Esophagus squamous epithelium (tissue), 5 donors: ENCODE measurements at regions of chr14 and their contacts with region 1.

Region 1: GRCh38 chr14:63624203-63624602 is 17.5 kb downstream of the WDR89 start:
- DNase-seq: no peak
- H3K4me3 ChIP-seq: no peak overlapping the region
- H3K27ac ChIP-seq: no peak overlapping the region
- H3K4me1 ChIP-seq: no peaks in the 10 kb centered on the region
- H3K27me3 ChIP-seq: no peaks in the 10 kb centered on the region
- CTCF ChIP-seq: no peak
- POLR2A ChIP-seq: no peak

Region 2: GRCh38 chr14:63493246-63493645 is 131.0 kb before region 1 on chr14:
- intact Hi-C with region 1: no loop called
- DNase-seq: no peak
- H3K4me3 ChIP-seq: no peak overlapping the region
- H3K27ac ChIP-seq: peak overlapping the region in 3 of 4 donors; percentile 64 to 82 (median 71)
- H3K4me1 ChIP-seq: peaks cover 0 to 77% (median 31%) of the 10 kb centered on the region in 3 donors
- H3K27me3 ChIP-seq: no peaks in the 10 kb centered on the region
- CTCF ChIP-seq: peak in 1 of 6 experiments; percentile 24
- POLR2A ChIP-seq: no peak

Region 3: DNA sequence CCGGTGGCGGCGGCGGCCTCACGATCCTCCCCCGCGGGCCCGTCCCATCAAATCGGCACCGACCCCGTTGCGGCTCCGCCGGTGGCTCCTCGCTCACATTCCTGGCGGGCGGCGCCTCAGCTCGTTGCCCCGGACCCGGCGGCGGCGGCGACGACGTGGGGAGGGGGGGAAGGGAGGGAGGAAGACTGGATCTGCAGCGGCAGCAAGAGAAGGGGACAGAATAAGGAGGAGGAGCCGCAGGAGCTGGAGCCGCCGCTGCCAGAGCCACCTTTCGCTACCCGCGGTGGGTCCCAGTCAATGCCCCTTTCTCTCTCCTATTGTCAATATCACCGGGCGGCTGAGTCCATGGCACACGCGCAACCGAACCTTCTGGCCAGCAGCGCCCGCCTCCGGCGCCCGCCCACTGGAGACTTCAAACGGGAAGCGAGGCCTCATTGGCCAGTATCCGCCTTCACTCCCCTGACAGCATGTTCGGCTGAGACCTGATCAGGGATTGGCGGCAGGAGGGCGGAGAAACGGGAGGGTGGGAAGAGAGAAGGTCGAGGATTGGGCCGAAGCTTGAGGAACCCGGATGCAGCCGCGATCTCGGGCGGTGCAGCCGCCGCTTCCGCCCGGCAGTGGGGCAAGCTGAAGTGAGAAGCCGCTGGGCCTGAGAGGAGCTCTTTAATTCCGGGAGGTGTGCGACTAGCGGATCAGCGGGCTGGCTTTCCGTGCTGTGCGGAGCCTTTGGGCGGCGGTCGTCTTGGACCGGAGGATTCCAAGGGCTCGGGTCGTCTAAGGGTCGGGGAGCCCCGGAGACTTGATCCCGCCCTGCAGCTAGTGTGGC is 81.0 kb before region 1 on chr14 and contains the start of gene PPP2R5E:
- intact Hi-C with region 1: loop called (anchors 10 kb)
- DNase-seq: peak; percentile 87
- H3K4me3 ChIP-seq: peak within 1 kb of the TSS; percentile 78 to 89 (median 86)
- H3K27ac ChIP-seq: peak within 1 kb of the TSS; percentile 91 to 97 (median 94)
- H3K4me1 ChIP-seq: peaks cover 0 to 36% (median 14%) of the 10 kb centered on the region in 3 donors
- H3K27me3 ChIP-seq: no peaks in the 10 kb centered on the region
- CTCF ChIP-seq: peak in 1 of 6 experiments; percentile 21
- POLR2A ChIP-seq: peak in 2 of 4 donors; percentile 81 to 85
- total RNA-seq, gene PPP2R5E: 18.9 to 31.2 (median 26.0) TPM